ENCODE measurements at regions of chr10 and their contacts with region 1.

Region 1: DNA sequence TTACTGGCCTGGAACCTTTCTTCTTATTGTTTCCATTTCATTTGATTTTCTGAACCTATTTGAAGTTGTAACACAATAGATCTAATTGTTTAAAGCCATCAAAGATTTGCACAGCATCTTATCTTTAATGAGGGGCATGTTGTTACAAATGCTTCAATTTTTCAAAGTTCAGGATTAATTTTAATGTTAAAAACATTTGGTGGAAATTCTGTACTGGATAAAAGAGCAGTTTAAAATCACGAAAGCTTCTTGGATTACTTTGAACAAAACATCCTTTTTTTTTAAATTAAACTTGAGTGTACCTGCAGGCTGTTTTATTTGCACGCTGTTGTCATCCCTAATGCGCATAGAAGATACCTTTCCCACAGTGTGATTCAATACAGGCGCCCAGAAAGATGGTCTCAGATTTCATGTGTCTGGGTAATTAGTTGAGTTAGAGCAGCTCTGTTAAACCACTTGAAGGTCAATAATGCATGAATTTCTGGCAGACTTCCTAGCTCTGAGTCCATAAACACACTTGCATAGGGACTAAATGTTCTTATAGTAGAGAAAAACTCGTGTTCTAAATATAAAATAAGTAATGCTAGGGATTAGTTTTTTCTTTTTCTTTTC is 29.3 kb upstream of the DDX50 start:
- DNase-seq: peak; percentile 87
- ATAC-seq: peak; percentile 98
- H3K4me3 ChIP-seq: no peak overlapping the region
- H3K27ac ChIP-seq: no peak overlapping the region
- H3K4me1 ChIP-seq: peaks cover 15% of the 10 kb centered on the region
- H3K27me3 ChIP-seq: no peaks in the 10 kb centered on the region
- CTCF ChIP-seq: no peak

Region 2: DNA sequence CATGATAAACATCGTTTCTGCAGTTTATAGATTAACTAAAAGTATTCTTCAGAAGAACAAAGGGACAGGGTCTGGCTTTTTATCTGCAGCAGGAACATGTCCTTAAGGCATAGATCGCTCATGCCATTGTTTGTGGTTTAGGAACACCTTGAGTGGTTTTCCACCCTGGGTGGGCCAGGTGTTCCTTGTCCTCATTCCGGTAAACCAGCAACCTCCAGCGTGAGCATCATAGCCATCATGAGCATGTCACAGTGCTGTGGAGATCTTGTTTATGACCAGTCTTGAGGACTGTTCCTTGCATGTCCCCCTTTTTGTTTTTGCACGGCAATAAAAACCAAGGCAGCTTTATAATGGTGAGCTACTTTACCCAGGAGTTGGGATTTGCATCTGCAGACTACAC is 10.6 kb before region 1 on chr10:
- CTCF ChIA-PET with region 1: no interaction called
- POLR2A ChIA-PET with region 1: interaction called, 24 read pairs
- intact Hi-C with region 1: no loop called
- DNase-seq: no peak
- ATAC-seq: no peak
- H3K4me3 ChIP-seq: no peak overlapping the region
- H3K27ac ChIP-seq: no peak overlapping the region
- H3K4me1 ChIP-seq: no peaks in the 10 kb centered on the region
- H3K27me3 ChIP-seq: no peaks in the 10 kb centered on the region
- CTCF ChIP-seq: no peak